K562 (cell line): ENCODE measurements at regions of chr3 and their contacts with region 1.

Region 1: DNA sequence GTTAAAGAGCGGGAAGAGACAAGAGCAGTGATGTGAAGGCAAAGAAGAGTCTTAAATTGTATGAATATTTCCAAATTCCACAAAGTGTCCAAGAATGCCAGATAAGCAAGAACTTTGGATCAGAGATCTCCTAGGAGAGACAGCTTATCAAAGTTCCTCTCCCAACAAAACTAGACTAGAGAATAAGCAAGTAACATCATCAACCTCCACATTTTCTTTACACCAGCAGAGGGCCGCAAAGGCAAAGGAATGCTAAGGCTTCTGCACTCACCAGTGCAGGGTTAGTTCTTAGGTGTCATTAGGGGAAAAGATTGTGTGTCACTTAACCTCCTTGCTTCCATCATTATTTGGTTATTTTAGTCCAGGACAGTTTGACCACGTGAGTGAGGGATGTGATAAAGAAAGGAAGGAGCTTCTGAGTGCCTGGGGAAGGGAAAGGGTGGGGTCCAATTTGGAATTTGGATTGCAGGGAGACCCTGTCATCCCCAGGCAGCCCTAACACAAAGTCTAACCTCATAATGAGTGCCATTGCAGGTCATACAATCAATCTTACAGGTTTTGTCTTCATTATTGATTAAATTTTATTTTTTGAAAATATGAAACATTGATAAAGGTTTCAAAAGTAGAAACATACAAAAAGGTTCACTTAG is 7.5 kb upstream of the CMTM6 start:
- DNase-seq: peak; percentile 53 to 86 (median 70)
- ATAC-seq: peak; percentile 99
- H3K4me3 ChIP-seq: no peak overlapping the region
- H3K27ac ChIP-seq: no peak overlapping the region
- H3K4me1 ChIP-seq: no peaks in the 10 kb centered on the region; a peak in 1 of 5 replicates
- H3K27me3 ChIP-seq: no peaks in the 10 kb centered on the region
- CTCF ChIP-seq: peak; percentile 87 to 99 (median 90)
- EP300 ChIP-seq: 0 out of 2 replicates have a peak, but pooled peaks have one; percentile 5
- POLR2A ChIP-seq: no peak
- RAD21 ChIP-seq: peak; percentile 99 to 100

Region 2: DNA sequence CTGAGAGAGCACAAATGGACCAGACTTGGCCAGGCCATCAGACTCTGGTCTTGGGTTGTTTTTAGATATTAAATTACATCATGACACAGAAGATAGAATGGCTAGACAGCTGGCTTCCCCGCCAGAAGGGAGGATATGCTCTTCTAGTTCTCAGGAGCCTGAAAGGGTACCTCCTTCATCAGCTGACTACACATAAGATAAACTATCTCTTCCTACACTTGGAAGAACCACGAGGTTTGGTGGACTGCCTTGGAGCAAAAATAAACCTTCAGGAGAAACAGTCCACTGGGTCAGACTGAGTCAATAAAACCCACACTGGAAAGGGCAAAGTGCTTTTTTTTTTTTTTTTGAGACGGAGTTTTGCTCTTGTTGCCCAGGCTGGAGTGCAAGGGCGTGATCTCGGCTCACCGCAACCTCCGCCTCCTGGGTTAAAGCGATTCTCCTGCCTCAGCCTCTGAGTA is 86.7 kb after region 1 on chr3:
- CTCF ChIA-PET with region 1: no interaction called
- POLR2A ChIA-PET with region 1: no interaction called
- in situ Hi-C with region 1: no loop called
- intact Hi-C with region 1: loop called (anchors 5 kb)
- DNase-seq: peak in 2 of 4 experiments; percentile 50 to 73
- ATAC-seq: peak; percentile 77
- H3K4me3 ChIP-seq: no peak overlapping the region
- H3K27ac ChIP-seq: no peak overlapping the region
- H3K4me1 ChIP-seq: peaks cover 13 to 16% of the 10 kb centered on the region in 2 experiments; a peak in 4 of 5 replicates
- H3K27me3 ChIP-seq: peaks cover 25 to 29% of the 10 kb centered on the region in 2 experiments
- CTCF ChIP-seq: no peak
- EP300 ChIP-seq: no peak
- POLR2A ChIP-seq: no peak
- RAD21 ChIP-seq: no peak

Region 3: GRCh38 chr3:32667122-32667521 is 156.9 kb after region 1 on chr3:
- CTCF ChIA-PET with region 1: interaction called, 29 read pairs
- POLR2A ChIA-PET with region 1: interaction called, 3 read pairs
- in situ Hi-C with region 1: loop called (anchors 5 kb)
- intact Hi-C with region 1: loop called (anchors 1 kb)
- DNase-seq: no peak
- ATAC-seq: no peak
- H3K4me3 ChIP-seq: no peak overlapping the region
- H3K27ac ChIP-seq: no peak overlapping the region
- H3K4me1 ChIP-seq: peaks cover 0 to 2% of the 10 kb centered on the region in 2 experiments; a peak in 1 of 5 replicates
- H3K27me3 ChIP-seq: 0 out of 5 replicates have a peak, but pooled peaks cover 0 to 2% of the 10 kb centered on the region in 2 experiments
- CTCF ChIP-seq: no peak
- EP300 ChIP-seq: no peak
- POLR2A ChIP-seq: no peak
- RAD21 ChIP-seq: no peak

Region 4: GRCh38 chr3:32781210-32781968 is 271.2 kb after region 1 on chr3:
- CTCF ChIA-PET with region 1: no interaction called
- POLR2A ChIA-PET with region 1: no interaction called
- in situ Hi-C with region 1: no loop called
- intact Hi-C with region 1: loop called (anchors 1 kb)
- DNase-seq: peak; percentile 90 to 95 (median 92)
- ATAC-seq: peak; percentile 97
- H3K4me3 ChIP-seq: peak overlapping the region; percentile 50
- H3K27ac ChIP-seq: peak overlapping the region; percentile 37; the same call in 2 of the 3 replicates
- H3K4me1 ChIP-seq: peaks cover 4 to 20% of the 10 kb centered on the region in 2 experiments; a peak in 4 of 5 replicates
- H3K27me3 ChIP-seq: 0 out of 5 replicates have a peak, but pooled peaks cover 0 to under 1% of the 10 kb centered on the region in 2 experiments
- CTCF ChIP-seq: peak; percentile 84 to 95 (median 87)
- EP300 ChIP-seq: 0 out of 2 replicates have a peak, but pooled peaks have one; percentile 15
- POLR2A ChIP-seq: peak; percentile 77
- RAD21 ChIP-seq: peak; percentile 57 to 76

Region 5: GRCh38 chr3:32934150-32934742 is 424.0 kb after region 1 on chr3:
- CTCF ChIA-PET with region 1: interaction called, 17 read pairs
- POLR2A ChIA-PET with region 1: no interaction called
- in situ Hi-C with region 1: loop called (anchors 5 kb)
- intact Hi-C with region 1: loop called (anchors 1 kb)
- DNase-seq: peak in 1 of 4 experiments; percentile 54
- ATAC-seq: peak; percentile 61; the same call in 2 of the 3 replicates
- H3K4me3 ChIP-seq: no peak overlapping the region
- H3K27ac ChIP-seq: no peak overlapping the region
- H3K4me1 ChIP-seq: no peaks in the 10 kb centered on the region; a peak in 1 of 5 replicates
- H3K27me3 ChIP-seq: no peaks in the 10 kb centered on the region; a peak in 1 of 5 replicates
- CTCF ChIP-seq: peak; percentile 65 to 84 (median 78)
- EP300 ChIP-seq: no peak
- POLR2A ChIP-seq: no peak
- RAD21 ChIP-seq: peak; percentile 83 to 91

Region 6: DNA sequence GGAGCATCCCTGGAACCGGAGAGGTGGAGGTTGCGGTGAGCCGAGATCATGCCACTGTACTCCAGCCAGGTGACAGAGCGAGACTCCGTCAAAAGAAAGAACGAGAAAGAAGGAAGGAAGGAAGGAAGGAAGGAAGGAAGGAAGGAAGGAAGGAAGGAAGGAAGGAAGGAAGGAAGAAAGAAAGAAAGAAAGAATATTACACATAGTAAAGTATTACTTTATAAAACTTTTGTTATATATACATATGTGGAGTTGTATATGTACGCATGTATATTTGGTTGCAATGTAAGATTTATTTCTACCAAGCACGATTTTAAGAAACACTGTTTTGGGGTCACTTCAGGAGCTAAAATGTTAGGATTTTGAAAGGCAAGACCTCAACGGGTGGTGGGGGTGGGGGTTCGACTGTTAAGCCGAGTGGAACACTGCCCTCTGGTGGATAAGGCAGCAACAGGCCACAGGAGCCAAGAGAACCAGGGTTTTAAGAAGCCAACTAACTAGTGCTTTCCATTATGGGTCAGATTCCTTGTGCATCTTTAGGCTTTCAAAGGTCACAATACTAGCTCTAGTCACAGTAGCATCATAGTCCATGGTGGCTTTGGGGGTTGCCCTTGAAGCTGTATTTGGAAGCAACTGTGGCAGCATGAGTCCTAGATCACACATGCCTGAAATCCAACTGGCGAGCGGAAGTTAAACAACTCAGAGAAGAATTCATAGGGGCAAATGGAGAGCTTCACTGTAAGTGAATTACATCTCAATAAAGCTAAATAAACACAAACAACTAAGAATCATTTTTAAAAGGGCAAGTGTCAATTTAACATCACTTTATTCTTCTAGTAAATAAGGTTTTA is 564.2 kb after region 1 on chr3:
- CTCF ChIA-PET with region 1: no interaction called
- POLR2A ChIA-PET with region 1: no interaction called
- in situ Hi-C with region 1: no loop called
- intact Hi-C with region 1: loop called (anchors 10 kb)
- DNase-seq: peak; percentile 89 to 93 (median 91)
- ATAC-seq: peak; percentile 93
- H3K4me3 ChIP-seq: no peak overlapping the region
- H3K27ac ChIP-seq: no peak overlapping the region
- H3K4me1 ChIP-seq: peaks cover 0 to 17% of the 10 kb centered on the region in 2 experiments; a peak in 4 of 5 replicates
- H3K27me3 ChIP-seq: no peaks in the 10 kb centered on the region
- CTCF ChIP-seq: peak; percentile 92 to 97 (median 96)
- EP300 ChIP-seq: no peak
- POLR2A ChIP-seq: no peak
- RAD21 ChIP-seq: peak; percentile 82 to 95